Calu3 (cell line): ENCODE measurements at regions of chr1 and their contacts with region 1.

Region 1: DNA sequence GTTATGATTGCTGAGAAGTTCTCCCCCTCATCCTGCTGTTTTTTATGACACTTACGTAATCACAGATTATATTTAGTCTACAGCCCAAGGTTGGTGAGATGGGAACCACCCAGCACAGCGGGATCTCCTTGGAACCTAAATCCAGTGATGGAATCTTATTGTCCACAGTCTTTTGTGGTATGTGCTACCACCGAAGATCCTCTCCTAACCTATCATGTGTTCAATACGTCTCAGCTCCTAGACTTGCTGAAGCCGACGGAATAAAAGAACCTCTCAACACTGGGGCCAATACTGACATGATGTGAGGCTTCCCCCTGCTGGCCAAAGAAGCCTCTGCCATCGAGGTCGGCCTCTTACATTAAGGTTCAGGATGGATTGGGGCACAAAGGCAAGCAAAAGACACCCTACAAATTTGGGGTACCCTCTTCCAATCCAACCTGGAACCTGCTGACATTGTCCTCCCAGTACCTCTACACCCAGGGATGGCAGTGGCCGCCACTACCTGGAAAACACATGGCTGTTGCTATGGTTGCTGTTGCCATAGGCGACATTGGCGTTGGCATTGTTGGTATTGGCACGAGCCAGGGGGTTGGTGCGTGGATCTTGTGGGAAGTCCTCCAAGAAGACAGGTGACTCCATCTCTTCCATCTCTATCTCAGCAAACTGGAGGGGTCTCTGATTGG is 19.4 kb upstream of the KIF21B start:
- DNase-seq: peak; percentile 75
- H3K4me3 Mint-ChIP-seq: no peak overlapping the region
- H3K27ac Mint-ChIP-seq: no peak overlapping the region
- H3K4me1 Mint-ChIP-seq: no peaks in the 10 kb centered on the region
- H3K27me3 Mint-ChIP-seq: peaks cover 38% of the 10 kb centered on the region
- CTCF ChIP-seq: peak; percentile 90

Region 2: DNA sequence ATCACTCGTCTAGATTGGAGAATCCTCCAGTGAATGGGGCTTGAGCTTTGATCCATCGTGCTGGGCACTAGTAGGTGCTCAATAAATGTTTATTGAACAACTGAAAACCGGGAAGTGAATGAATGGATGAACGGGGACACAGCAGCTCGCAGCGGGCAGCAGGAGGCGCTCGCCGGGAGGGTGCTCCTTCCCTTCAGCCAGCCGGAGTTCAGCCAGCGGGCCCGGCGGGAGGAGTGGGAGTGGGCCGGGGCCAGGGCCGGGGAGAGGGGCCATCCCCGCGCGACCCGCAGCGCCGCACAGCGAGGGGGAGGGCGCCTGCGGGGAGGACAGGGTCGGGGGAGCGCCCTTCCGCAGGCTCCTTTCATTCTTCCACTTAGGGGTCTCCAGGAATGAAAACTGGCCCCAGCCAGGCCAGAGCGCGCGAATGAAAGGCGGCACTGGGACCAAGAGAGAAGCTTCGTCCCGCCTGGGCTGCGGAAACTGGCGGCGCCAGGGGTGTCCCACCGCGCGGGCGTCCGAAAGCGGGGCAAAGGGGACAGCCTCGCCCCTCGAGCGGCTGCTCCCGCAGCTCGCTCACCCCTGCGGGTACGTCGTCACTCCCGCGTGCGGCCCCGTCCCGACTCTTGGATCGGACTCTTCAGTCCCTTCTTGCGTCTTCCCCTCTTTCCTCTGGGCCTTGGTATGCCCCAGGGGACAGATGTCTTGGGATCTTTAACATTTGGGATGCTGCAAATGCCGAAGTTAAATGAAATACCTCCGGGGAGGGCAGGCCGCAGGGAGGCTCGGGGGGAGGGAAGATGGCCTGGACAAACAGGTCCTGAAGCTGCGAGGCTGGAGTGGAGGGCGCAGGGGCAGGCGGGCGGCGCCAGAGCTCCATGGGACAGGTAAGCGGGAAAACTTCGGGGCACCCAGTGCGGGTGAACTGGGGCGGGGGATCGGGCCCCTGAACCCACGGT is 151.8 kb before region 1 on chr1:
- CTCF ChIA-PET with region 1: interaction called, 6 read pairs
- intact Hi-C with region 1: loop called (anchors 2 kb)
- DNase-seq: peak; percentile 83
- H3K4me3 Mint-ChIP-seq: peak overlapping the region; percentile 99
- H3K27ac Mint-ChIP-seq: peak overlapping the region; percentile 89
- H3K4me1 Mint-ChIP-seq: peaks cover 65% of the 10 kb centered on the region
- H3K27me3 Mint-ChIP-seq: no peaks in the 10 kb centered on the region
- CTCF ChIP-seq: peak; percentile 65

Region 3: DNA sequence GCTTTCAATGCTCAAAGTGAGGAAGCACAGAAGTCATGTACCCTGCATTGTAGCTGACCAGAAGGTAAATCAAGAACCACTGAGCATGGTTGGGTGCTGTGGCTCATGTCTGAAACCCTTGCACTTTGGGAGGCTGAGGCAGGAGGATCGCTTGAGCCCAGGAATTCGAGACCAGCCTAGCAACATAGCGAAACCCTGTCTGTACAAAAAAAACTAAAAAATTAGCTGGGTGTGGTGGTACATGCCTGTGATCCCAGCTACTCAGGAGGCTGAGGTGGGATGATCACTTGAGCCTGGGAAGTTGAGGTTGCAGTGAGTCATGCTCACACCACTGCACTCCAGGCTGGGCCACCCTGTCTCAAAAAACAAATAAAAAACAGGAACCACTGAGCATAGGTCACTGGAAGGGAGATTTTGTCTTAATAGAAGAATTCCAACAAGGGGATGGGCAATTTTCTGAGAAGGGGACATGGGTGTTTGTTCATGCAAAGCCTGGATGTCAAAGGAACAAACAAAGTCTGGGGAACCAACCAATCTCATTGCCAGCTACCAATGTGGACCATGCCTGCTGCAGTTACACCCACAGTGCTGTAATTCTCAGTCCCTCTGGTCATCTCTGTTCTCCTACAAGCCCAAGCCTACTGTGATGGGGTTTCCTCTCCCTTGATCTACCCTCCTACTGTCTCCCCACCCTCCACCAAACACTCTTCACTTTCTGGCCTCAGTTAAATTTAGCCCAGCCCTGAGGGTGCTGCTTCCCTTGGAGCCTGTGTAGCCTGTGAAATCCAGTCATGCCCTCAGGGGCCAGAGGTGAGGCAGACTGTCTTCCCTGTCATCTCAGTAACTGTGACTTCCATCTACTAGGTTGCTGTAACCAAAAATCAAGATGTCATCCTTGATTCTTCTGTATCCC is 1015.3 kb after region 1 on chr1:
- CTCF ChIA-PET with region 1: no interaction called
- intact Hi-C with region 1: no loop called
- DNase-seq: peak; percentile 77
- H3K4me3 Mint-ChIP-seq: peak overlapping the region; percentile 1
- H3K27ac Mint-ChIP-seq: peak overlapping the region; percentile 66
- H3K4me1 Mint-ChIP-seq: peaks cover 62% of the 10 kb centered on the region
- H3K27me3 Mint-ChIP-seq: no peaks in the 10 kb centered on the region
- CTCF ChIP-seq: no peak